BJ (cell line): ENCODE measurements at regions of chr6 and their contacts with region 1.

Region 1: GRCh38 chr6:145633981-145634627 is 101.2 kb downstream of the EPM2A start:
- DNase-seq: peak; percentile 3
- H3K4me3 ChIP-seq: no peak overlapping the region
- H3K27me3 ChIP-seq: no peaks in the 10 kb centered on the region
- CTCF ChIP-seq: peak; percentile 89

Region 2: DNA sequence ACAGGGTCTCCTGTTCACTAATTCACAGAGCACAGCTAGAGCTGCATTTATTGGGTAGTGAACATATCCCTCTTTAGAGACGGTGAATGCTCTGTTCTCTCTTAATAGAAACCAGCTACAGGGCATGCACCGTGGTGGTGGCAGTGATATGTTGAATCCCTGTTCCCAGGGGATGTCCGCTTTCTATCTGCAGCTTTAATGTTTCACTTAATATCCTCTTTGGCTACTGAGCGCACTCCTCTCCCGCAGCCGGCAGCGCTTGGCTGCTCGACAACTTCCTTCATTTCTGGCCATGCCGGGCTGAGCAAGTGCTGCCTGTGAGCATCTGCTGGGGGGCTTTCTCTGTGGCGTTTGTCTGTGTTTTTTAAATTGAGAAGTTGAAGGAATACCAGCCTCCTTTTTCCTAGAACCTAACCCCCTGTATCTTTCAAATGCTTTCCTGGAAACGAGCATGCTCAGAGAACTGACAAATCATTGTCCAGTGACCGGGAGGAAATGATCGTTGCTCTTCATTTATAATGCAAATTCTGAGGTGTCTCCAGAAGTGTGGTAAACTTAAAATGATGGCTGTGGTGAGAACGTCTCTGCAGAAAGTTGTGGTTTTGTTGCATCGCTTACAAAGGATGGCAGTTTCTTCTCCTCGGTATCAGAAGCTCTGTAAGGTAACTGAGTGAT is 1051.0 kb before region 1 on chr6:
- CTCF ChIA-PET with region 1: interaction called, 15 read pairs
- POLR2A ChIA-PET with region 1: no interaction called
- DNase-seq: no peak
- H3K4me3 ChIP-seq: peak overlapping the region; percentile 26
- H3K27me3 ChIP-seq: no peaks in the 10 kb centered on the region
- CTCF ChIP-seq: no peak

Region 3: GRCh38 chr6:145380186-145380585 is 253.9 kb before region 1 on chr6:
- CTCF ChIA-PET with region 1: no interaction called
- POLR2A ChIA-PET with region 1: no interaction called
- DNase-seq: peak; percentile 31
- H3K4me3 ChIP-seq: no peak overlapping the region
- H3K27me3 ChIP-seq: no peaks in the 10 kb centered on the region
- CTCF ChIP-seq: no peak

Region 4: DNA sequence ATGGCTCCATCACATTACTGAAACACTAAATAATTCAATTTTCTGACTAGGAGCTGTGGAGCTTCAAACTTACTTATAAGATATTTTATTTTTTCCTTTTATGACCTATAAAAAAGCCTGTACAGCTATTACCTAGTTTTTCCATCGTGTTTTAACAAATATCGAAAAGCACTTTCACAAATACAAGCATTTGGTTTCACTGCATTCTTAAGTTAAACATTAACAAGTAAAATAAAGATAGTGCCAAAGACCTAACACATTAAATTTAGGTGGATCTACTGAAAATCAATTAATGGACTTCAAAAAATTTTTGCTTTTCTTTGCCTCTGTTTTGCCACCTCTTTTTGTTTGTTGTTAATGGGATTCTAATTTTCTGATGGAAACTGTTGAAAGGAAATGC is 17.9 kb after region 1 on chr6:
- CTCF ChIA-PET with region 1: interaction called, 11 read pairs
- POLR2A ChIA-PET with region 1: no interaction called
- DNase-seq: no peak
- H3K4me3 ChIP-seq: no peak overlapping the region
- H3K27me3 ChIP-seq: no peaks in the 10 kb centered on the region
- CTCF ChIP-seq: no peak

Region 5: DNA sequence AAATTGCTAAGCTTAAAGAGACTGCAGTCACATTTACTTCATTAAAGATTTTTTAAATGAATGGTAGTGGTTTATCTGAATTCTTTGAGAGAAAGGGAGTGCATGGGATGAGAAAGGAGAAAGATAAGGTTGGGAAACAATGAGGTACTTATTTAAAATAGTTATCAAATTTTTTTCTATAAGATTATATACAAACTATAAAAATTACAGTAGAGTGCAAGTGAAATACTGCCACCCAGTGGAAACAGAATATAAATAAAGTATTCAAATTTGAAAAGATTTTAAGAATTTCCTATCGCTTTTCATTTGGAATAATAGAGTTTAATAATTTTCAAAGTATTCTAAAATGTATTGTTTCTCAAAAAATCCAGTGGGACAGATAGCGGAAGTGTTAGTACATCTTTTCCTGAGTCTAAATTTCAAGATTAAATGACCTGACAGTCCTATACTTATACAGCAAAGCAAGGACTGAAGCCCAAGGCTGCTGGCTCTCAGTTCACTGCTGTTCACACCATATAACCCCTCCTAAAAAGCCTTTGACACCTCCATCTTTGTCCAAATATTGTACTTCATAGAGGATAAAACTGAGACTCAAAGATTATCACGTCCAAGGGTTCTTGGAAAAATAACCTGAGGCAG is 70.2 kb after region 1 on chr6:
- CTCF ChIA-PET with region 1: interaction called, 11 read pairs
- POLR2A ChIA-PET with region 1: no interaction called
- DNase-seq: no peak
- H3K4me3 ChIP-seq: no peak overlapping the region
- H3K27me3 ChIP-seq: no peaks in the 10 kb centered on the region
- CTCF ChIP-seq: peak; percentile 35; the same call in 1 of the 2 replicates